B cell (primary cell): ENCODE measurements at regions of chr11 and their contacts with region 1.

Region 1: DNA sequence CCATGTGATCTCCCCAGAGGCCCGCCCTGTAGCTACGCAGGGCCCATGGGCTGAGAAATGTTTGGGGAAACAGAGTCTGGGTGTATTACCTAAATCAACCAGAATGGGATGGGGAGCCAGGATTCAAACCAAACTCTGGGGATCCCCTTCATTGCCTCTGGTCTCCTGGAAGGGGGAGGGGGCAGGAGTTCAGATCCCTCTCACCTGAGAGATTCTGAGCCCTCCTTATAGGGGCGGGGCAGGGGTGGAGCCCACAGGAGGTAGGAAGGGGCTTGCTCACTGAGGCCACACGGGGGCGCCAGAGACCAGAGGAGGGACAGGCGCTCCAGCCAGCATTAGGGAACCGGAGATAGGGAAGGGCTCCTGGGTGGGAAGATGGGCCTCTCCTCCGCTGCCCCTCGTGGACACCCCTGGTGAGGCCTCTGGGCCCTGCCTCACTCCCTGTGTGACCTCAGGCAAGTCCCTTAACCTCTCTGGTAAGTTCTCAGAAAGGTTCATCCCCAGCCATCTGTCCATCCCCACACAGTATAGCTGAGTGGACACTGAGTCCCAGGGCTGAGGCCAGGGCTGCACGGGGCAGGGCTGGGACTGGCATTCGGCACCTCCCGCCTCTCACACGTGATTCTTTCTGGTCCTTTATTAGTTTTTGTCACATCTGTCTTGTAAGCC is 2.7 kb upstream of the CDC42BPG start:
- DNase-seq: peak; percentile 92
- ATAC-seq: peak; percentile 20
- H3K4me3 ChIP-seq: no peak overlapping the region
- H3K4me3 Mint-ChIP-seq: peak overlapping the region; percentile 63
- H3K27ac ChIP-seq: peak overlapping the region in 1 of 2 donors; percentile 25
- H3K27ac Mint-ChIP-seq: peak overlapping the region; percentile 75
- H3K4me1 ChIP-seq: peaks cover 53 to 69% of the 10 kb centered on the region in 2 donors
- H3K4me1 Mint-ChIP-seq: peaks cover 61% of the 10 kb centered on the region
- H3K27me3 ChIP-seq: no peaks in the 10 kb centered on the region
- H3K27me3 Mint-ChIP-seq: no peaks in the 10 kb centered on the region
- CTCF ChIP-seq: peak; percentile 97

Region 2: DNA sequence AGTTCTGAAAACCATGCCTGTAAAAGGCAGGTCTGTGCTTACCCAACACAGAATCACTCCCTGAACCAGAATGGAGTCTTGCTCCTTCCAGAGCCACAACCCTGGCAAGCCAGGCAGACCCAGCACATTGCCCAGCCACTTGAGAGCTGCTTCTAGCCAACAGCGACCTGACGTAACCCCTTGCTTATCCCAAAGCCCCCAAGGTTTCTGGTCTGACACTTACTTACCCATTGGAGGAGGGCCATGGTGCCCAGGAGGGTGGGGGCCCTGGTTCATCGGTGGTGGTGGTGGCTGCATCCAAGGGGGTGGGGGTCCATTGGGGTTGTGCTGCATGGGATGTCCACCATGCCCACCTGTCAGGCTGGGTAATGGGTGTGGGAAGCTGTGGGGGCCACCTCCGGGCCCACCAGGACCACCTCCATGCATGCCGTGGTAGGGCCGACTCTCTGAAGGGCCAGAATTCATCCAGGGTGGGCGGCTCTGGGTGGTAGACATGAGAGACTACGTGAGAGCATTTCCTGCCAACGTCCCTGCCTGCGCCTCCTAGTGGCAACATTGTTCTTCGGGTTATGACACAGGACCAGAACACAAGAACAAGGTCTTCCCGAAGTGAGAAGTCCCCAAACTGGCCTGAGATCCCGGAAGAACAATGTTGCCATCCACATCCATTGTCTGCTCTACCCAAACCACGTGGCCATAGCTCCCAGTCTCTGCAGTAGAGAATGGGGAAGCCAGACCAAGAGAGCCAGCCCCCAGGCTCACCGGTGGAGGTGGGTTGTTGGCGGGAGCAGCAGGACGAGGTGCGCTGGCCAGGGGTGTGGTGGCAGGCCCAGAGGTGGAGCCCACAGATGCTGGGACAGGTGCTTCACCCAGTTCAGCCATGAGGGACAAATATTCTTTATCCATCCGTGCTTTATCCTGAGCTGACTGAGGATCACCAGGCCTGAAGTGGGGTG is 79.5 kb before region 1 on chr11:
- CTCF ChIA-PET with region 1: interaction called, 13 read pairs
- POLR2A ChIA-PET with region 1: no interaction called
- intact Hi-C with region 1: no loop called
- DNase-seq: peak; percentile 82
- ATAC-seq: no peak
- H3K4me3 ChIP-seq: no peak overlapping the region
- H3K4me3 Mint-ChIP-seq: peak overlapping the region; percentile 66
- H3K27ac ChIP-seq: peak overlapping the region; percentile 64 to 75
- H3K27ac Mint-ChIP-seq: peak overlapping the region; percentile 92
- H3K4me1 ChIP-seq: peaks cover 85 to 96% of the 10 kb centered on the region in 2 donors
- H3K4me1 Mint-ChIP-seq: peaks cover 91% of the 10 kb centered on the region
- H3K27me3 ChIP-seq: no peaks in the 10 kb centered on the region
- H3K27me3 Mint-ChIP-seq: no peaks in the 10 kb centered on the region
- CTCF ChIP-seq: peak; percentile 90

Region 3: GRCh38 chr11:64803163-64803845 is 43.8 kb before region 1 on chr11 and contains the start of gene MAP4K2:
- CTCF ChIA-PET with region 1: interaction called, 8 read pairs
- POLR2A ChIA-PET with region 1: interaction called, 4 read pairs
- intact Hi-C with region 1: loop called (anchors 1 kb)
- DNase-seq: peak; percentile 90
- ATAC-seq: peak; percentile 83
- H3K4me3 ChIP-seq: peak within 1 kb of the TSS; percentile 66 to 96 (median 71)
- H3K4me3 Mint-ChIP-seq: peak within 1 kb of the TSS; percentile 90
- H3K27ac ChIP-seq: peak within 1 kb of the TSS; percentile 74 to 90
- H3K27ac Mint-ChIP-seq: peak within 1 kb of the TSS; percentile 92
- H3K4me1 ChIP-seq: peaks cover 46 to 54% of the 10 kb centered on the region in 2 donors
- H3K4me1 Mint-ChIP-seq: peaks cover 45% of the 10 kb centered on the region
- H3K27me3 ChIP-seq: no peaks in the 10 kb centered on the region
- H3K27me3 Mint-ChIP-seq: no peaks in the 10 kb centered on the region
- CTCF ChIP-seq: no peak
- total RNA-seq, gene MAP4K2: 118 and 122 TPM in 2 replicates

Region 4: GRCh38 chr11:64878494-64879243 is 31.5 kb after region 1 on chr11 and contains the start of gene EHD1:
- CTCF ChIA-PET with region 1: interaction called, 1,254 read pairs
- POLR2A ChIA-PET with region 1: interaction called, 158 read pairs
- intact Hi-C with region 1: loop called (anchors 1 kb)
- DNase-seq: peak; percentile 100
- ATAC-seq: peak; percentile 84
- H3K4me3 ChIP-seq: peak within 1 kb of the TSS; percentile 78 to 99 (median 92)
- H3K4me3 Mint-ChIP-seq: peak within 1 kb of the TSS; percentile 95
- H3K27ac ChIP-seq: peak within 1 kb of the TSS; percentile 86 to 99
- H3K27ac Mint-ChIP-seq: peak within 1 kb of the TSS; percentile 94
- H3K4me1 ChIP-seq: peaks cover 48 to 59% of the 10 kb centered on the region in 2 donors
- H3K4me1 Mint-ChIP-seq: peaks cover 61% of the 10 kb centered on the region
- H3K27me3 ChIP-seq: no peaks in the 10 kb centered on the region
- H3K27me3 Mint-ChIP-seq: no peaks in the 10 kb centered on the region
- CTCF ChIP-seq: peak; percentile 57
- total RNA-seq, gene EHD1: 249 and 280 TPM in 2 replicates

Region 5: DNA sequence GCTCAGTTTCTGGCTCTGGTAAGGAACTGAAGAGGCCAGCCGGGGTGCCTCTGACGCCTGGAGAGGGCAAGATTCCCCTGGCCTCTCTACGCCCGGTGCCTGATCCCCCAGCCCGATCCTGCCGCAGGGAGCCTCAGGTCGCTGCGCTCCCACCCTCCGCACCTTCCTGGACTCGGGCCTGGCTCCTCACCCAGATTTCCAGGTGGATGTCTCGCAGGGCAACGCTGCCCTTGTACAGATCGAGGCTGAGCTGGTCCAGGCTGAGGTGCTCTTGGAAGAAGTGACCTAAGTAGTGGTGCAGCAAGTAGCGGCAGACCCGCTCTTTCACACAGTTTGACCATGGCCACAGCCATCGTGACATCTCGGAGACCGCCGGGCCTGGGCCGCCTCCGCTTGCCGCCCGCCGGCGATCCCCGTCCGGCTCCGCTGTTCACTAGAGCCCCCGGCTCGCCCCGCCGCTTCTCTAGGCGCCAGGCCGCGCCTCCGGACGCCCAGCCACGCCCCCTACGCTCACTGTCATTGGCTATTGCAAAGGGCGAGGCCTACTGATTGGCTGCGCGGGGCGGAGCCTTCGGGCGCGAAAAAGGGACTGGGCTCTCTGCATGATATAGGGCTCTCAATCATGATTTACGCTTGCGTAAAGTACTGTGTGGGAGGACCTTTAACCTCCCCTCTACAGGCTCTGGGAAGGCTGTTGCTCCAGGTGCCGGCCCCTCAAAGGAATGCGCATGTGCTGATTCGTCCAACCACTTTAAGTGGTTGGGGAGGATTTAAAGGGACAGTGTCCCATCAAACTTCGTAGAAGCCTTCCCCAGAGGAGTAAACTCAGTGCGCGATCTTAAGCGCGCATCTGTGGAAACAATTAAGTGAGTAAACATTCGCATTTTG is 69.9 kb after region 1 on chr11 and contains the start of gene ATG2A:
- CTCF ChIA-PET with region 1: interaction called, 13 read pairs
- POLR2A ChIA-PET with region 1: no interaction called
- intact Hi-C with region 1: loop called (anchors 1 kb)
- DNase-seq: peak; percentile 99
- ATAC-seq: peak; percentile 97
- H3K4me3 ChIP-seq: peak within 1 kb of the TSS; percentile 86 to 96 (median 90)
- H3K4me3 Mint-ChIP-seq: peak within 1 kb of the TSS; percentile 88
- H3K27ac ChIP-seq: peak within 1 kb of the TSS; percentile 44 to 84
- H3K27ac Mint-ChIP-seq: peak within 1 kb of the TSS; percentile 91
- H3K4me1 ChIP-seq: peaks cover 19 to 33% of the 10 kb centered on the region in 2 donors
- H3K4me1 Mint-ChIP-seq: peaks cover 34% of the 10 kb centered on the region
- H3K27me3 ChIP-seq: no peaks in the 10 kb centered on the region
- H3K27me3 Mint-ChIP-seq: no peaks in the 10 kb centered on the region
- CTCF ChIP-seq: no peak
- total RNA-seq, gene ATG2A: 38.6 and 43.4 TPM in 2 replicates

Region 6: GRCh38 chr11:65117216-65118096 is 270.3 kb after region 1 on chr11 and contains the start of gene ZNHIT2:
- CTCF ChIA-PET with region 1: interaction called, 24 read pairs
- POLR2A ChIA-PET with region 1: no interaction called
- intact Hi-C with region 1: no loop called
- DNase-seq: peak; percentile 100
- ATAC-seq: peak; percentile 74
- H3K4me3 ChIP-seq: peak within 1 kb of the TSS; percentile 0 to 80 (median 80)
- H3K4me3 Mint-ChIP-seq: peak within 1 kb of the TSS; percentile 91
- H3K27ac ChIP-seq: peak within 1 kb of the TSS; percentile 69 to 96
- H3K27ac Mint-ChIP-seq: peak within 1 kb of the TSS; percentile 91
- H3K4me1 ChIP-seq: peaks cover 38 to 60% of the 10 kb centered on the region in 2 donors
- H3K4me1 Mint-ChIP-seq: peaks cover 71% of the 10 kb centered on the region
- H3K27me3 ChIP-seq: no peaks in the 10 kb centered on the region
- H3K27me3 Mint-ChIP-seq: no peaks in the 10 kb centered on the region
- CTCF ChIP-seq: peak; percentile 92
- total RNA-seq, gene ZNHIT2: 14.1 and 14.5 TPM in 2 replicates